HEK293 (cell line): ENCODE measurements at regions of chr19 and their contacts with region 1.

Region 1: DNA sequence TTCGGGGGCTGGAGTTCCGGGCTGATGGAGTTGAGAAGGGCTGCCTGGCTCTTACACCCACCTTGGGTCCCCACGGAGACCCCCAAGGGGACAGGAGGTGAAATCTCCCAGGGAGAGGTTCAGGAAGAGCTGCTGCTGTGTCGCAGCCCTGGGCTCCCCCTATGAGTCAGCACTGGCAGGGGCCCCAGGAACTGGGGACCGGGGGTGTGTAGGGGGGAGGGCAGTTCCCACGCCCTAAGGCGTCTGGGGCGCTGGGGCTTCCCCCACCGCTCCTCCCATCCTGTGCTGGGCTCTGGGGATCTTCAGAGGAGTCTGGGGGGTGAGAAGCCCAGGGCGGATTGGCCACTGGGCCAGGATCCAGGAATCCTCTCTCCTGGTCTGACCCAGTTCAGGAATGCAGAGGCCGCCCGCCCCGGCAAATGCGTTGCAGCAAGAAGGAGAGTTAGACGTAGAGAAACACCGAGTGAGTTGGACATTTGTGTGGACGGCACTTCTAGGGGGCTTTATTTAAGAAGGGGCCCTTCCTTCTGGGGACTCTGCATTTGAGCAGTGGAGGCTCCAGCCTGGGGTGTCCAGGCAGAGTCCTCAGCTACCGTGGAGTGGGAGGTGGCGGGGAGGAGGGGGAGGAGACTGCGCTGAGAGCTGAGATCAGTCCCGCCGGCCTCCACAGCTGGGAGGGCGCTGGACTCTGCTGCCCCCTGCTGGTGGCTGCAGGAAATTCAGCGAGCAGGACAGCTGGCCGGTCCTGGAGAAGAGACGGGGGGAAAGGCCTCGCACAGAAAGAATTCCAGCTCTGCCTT is 15.0 kb upstream of the NANOS3 start:
- H3K4me3 ChIP-seq: peak overlapping the region; percentile 39
- H3K27ac ChIP-seq: no peak overlapping the region; the same call in 1 of the 2 replicates
- H3K4me1 ChIP-seq: no peaks in the 10 kb centered on the region; the same call in 1 of the 2 replicates
- CTCF ChIP-seq: peak; percentile 95

Region 2: DNA sequence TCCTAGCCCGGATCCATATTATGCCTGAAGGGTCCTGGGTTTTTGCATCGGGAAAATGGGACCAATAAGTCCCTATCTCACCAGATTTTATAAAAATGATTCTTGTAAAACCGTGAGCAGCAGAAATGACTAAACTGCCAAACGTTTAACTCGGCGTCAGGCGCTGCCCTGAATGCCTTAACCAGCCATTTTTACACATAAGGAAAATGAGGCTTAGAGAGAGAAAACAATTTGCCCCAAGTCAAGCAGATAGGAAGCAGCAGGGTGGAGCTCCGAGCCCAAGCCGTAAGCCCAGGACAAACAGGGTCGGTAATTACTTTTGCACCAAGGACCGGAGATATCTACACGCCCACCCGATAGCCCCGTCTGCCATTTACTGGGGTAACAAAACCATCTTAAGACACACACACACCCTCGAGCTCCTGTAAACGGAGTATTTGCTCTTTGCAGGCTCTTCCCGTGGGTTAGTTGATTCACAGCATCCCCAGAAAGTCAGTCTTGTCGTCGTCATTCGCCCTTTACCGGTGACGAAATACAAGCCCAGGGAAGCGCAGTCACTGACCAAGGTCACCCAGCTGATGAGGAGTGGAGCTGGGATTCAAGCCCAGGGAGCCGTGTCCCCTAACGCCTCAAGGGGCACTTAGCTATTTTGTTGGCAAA is 113.6 kb before region 1 on chr19:
- CTCF ChIA-PET with region 1: interaction called, 6 read pairs
- POLR2A ChIA-PET with region 1: interaction called, 11 read pairs
- H3K4me3 ChIP-seq: peak overlapping the region; percentile 75
- H3K27ac ChIP-seq: peak overlapping the region; percentile 25; the same call in 1 of the 2 replicates
- H3K4me1 ChIP-seq: no peaks in the 10 kb centered on the region
- CTCF ChIP-seq: no peak

Region 3: GRCh38 chr19:13774217-13775191 is 87.4 kb before region 1 on chr19 and contains the start of gene C19orf53:
- CTCF ChIA-PET with region 1: interaction called, 25 read pairs
- POLR2A ChIA-PET with region 1: interaction called, 13 read pairs
- H3K4me3 ChIP-seq: peak within 1 kb of the TSS; percentile 73
- H3K27ac ChIP-seq: peak within 1 kb of the TSS; percentile 80
- H3K4me1 ChIP-seq: no peaks in the 10 kb centered on the region; the same call in 1 of the 2 replicates
- CTCF ChIP-seq: no peak

Region 4: DNA sequence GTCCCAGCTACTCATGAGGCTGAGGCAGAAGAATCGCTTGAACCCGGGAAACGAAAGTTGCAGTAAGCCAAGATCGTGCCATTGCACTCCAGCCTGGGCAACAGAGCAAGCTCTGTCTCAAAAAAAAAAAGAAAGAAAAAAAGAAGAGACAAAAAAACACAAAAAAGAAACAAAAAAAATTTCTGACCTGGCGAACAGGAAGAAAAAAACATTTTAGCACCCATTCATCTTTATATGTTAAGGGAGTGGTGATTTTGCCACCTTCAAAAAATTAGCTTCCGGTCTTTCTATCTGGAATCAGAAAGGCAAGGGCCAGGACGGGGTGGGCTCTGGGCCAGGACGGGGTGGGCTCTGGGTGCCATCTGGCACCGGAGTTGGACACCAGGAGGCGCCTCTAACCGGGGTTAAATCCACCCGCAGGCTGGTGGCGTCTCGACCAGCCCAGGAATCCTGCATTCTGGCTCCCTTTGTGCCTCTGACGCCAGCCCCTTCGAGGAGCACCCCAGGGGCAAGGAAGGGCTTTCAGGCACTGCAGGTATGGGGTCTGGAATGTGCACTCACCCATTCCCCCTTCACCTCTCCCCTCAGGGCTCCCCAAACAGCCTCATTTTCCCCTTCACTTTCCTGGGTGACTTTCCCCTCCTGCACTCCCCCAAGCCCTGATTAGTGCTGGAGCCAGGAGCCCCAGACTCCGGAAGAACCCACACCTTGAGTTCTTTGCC is 77.0 kb before region 1 on chr19:
- CTCF ChIA-PET with region 1: interaction called, 42 read pairs
- POLR2A ChIA-PET with region 1: interaction called, 7 read pairs
- H3K4me3 ChIP-seq: no peak overlapping the region
- H3K27ac ChIP-seq: no peak overlapping the region
- H3K4me1 ChIP-seq: no peaks in the 10 kb centered on the region; the same call in 1 of the 2 replicates
- CTCF ChIP-seq: 0 out of 2 replicates have a peak, but pooled peaks have one; percentile 27

Region 5: GRCh38 chr19:13794757-13795589 is 67.0 kb before region 1 on chr19 and contains the start of gene ZSWIM4:
- CTCF ChIA-PET with region 1: interaction called, 17 read pairs
- POLR2A ChIA-PET with region 1: interaction called, 7 read pairs
- H3K4me3 ChIP-seq: peak within 1 kb of the TSS; percentile 79
- H3K27ac ChIP-seq: peak within 1 kb of the TSS; percentile 76
- H3K4me1 ChIP-seq: peaks cover 8% of the 10 kb centered on the region
- CTCF ChIP-seq: no peak

Region 6: DNA sequence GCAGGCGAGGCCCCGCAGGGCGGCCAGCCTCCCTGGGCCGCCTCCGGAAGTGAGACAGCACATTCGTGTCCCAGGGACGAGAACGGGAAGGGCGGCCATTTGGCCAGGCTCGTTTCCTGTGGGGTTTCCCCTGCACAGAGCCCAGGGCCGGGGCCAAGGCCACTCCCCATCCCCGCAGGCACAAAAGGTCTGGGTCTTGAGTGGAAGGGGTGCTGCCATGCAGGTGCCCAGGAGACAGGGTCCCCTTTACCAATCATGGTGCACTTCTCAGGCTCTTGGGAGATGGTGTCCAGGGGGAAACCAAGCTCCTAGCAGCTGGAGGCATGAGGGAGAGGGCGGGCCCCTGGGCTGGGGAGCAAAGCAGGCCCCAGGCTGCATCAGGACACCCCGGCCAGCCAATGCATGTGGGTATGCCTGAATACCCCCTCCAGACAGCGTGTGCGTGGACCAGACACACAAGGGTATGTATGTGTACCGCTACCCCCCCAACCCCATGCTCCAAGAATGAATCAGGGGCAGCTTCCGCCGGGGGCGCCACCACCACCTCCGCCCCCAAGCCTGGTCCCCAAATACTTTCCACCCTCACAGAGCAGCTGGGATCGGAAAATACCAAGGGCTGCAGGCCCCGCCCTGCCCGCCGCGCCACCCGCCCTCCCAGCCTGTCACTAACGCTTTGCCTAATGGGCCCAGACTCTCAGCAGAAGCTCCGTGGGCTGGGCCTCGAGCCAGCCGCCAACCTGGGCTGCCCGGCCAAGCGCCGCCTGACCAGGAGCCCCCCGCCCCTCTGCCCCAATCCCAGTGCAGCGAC is 22.6 kb before region 1 on chr19:
- CTCF ChIA-PET with region 1: interaction called, 15 read pairs
- POLR2A ChIA-PET with region 1: interaction called, 6 read pairs
- H3K4me3 ChIP-seq: peak overlapping the region; percentile 21
- H3K27ac ChIP-seq: peak overlapping the region; percentile 24; the same call in 1 of the 2 replicates
- H3K4me1 ChIP-seq: peaks cover 14% of the 10 kb centered on the region
- CTCF ChIP-seq: no peak

Region 7: DNA sequence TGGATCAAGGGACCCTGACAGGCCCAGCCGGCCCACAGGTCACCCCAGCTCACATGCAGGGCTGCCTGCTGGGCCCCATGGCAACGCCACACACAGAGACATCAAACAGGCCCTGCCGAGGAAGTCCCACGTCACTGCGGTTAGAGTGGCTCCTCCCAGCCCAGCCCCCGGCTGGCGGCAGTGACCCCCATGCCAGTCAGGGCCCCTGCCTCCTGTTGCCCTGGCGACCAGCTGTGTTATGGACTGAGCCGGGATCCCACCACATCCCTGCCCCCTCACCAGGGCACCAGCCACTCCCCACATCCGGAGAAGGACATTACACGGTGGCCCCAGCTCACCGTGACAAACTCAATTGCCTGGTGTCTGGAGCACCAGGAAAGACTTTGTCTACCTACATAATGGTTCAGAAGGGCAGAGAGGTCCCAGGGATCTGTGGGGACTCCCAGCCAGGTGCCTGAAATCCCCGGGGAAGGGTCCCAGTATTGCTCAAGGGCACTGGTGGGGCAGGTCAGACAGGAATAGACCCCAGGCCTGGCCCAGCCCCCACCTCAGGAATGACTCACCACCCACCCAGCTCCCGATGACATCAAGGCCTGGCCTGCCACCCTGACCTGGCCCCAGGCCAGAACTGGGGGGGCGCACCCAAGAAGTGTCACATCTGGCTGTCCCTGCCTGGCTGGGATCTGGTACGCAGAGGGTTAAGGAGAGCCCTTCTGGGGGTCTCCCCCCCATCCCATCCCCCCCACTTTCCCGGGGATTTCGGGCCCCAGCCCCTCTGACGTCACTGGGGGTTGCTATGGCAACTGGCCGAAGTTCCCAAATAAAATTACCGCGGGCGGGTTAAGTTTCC is 15.2 kb before region 1 on chr19:
- CTCF ChIA-PET with region 1: interaction called, 45 read pairs
- POLR2A ChIA-PET with region 1: interaction called, 19 read pairs
- H3K4me3 ChIP-seq: peak overlapping the region; percentile 76
- H3K27ac ChIP-seq: peak overlapping the region; percentile 98
- H3K4me1 ChIP-seq: peaks cover 34% of the 10 kb centered on the region
- CTCF ChIP-seq: no peak